GM12878 (cell line): ENCODE measurements at regions of chr4 and their contacts with region 1.

Region 1: GRCh38 chr4:115433501-115433900 is 320.1 kb upstream of the NDST4 start:
- DNase-seq: no peak
- ATAC-seq: no peak
- H3K4me3 ChIP-seq: no peak overlapping the region
- H3K27ac ChIP-seq: no peak overlapping the region
- H3K4me1 ChIP-seq: no peaks in the 10 kb centered on the region
- H3K27me3 ChIP-seq: no peaks in the 10 kb centered on the region; a peak in 1 of 4 replicates
- CTCF ChIP-seq: no peak
- EP300 ChIP-seq: no peak
- POLR2A ChIP-seq: no peak
- RAD21 ChIP-seq: no peak

Region 2: DNA sequence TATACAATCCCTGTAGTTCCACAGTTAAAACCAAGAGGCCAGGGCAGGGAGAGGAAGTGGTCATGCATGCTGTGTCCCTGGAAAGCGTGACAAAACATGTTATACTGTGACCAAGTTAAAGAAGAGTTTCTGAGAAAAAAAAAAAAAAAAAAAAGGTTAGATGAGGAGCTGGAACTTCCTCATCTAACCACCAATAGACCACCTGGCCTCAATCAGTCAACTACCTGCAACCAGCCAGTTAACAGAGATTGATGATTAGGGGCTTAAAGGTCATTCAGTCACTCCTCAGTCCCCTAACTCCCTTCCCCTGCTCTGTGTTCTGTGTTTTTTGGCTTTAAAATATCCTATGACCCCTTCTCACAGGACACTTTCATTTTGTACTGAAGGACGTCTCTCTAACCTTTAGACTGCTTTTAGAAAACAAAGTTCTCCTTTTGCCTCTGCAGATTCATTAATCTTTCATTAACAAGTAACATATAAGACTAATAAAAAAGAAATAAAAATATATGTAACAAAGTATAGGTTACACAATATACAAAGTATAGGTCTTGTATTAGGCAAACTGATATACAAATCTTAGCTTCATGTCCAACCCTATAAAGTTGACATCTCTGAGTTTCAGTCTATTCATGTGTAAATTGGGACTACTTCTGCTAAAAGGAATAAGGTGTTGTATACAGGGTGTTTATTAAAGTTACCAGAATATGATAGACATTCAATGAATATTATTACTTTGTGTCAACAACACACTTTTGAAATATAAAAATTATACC is 141.0 kb before region 1 on chr4:
- CTCF ChIA-PET with region 1: no interaction called
- POLR2A ChIA-PET with region 1: no interaction called
- RAD21 ChIA-PET with region 1: no interaction called
- SMC1A ChIA-PET with region 1: interaction called, 4 read pairs
- in situ Hi-C with region 1: no loop called
- intact Hi-C with region 1: loop called (anchors 5 kb)
- DNase-seq: no peak
- ATAC-seq: peak; percentile 82
- H3K4me3 ChIP-seq: no peak overlapping the region
- H3K27ac ChIP-seq: no peak overlapping the region
- H3K4me1 ChIP-seq: no peaks in the 10 kb centered on the region
- H3K27me3 ChIP-seq: no peaks in the 10 kb centered on the region
- CTCF ChIP-seq: no peak
- EP300 ChIP-seq: no peak
- POLR2A ChIP-seq: no peak
- RAD21 ChIP-seq: no peak

Region 3: GRCh38 chr4:115418635-115419396 is 14.7 kb before region 1 on chr4:
- CTCF ChIA-PET with region 1: no interaction called
- POLR2A ChIA-PET with region 1: no interaction called
- RAD21 ChIA-PET with region 1: no interaction called
- SMC1A ChIA-PET with region 1: no interaction called
- in situ Hi-C with region 1: no loop called
- intact Hi-C with region 1: no loop called
- DNase-seq: no peak
- ATAC-seq: no peak
- H3K4me3 ChIP-seq: no peak overlapping the region
- H3K27ac ChIP-seq: no peak overlapping the region
- H3K4me1 ChIP-seq: no peaks in the 10 kb centered on the region
- H3K27me3 ChIP-seq: no peaks in the 10 kb centered on the region
- CTCF ChIP-seq: no peak
- EP300 ChIP-seq: no peak
- POLR2A ChIP-seq: no peak
- RAD21 ChIP-seq: no peak